ENCODE measurements at regions of chr17 and their contacts with region 1.

Region 1: DNA sequence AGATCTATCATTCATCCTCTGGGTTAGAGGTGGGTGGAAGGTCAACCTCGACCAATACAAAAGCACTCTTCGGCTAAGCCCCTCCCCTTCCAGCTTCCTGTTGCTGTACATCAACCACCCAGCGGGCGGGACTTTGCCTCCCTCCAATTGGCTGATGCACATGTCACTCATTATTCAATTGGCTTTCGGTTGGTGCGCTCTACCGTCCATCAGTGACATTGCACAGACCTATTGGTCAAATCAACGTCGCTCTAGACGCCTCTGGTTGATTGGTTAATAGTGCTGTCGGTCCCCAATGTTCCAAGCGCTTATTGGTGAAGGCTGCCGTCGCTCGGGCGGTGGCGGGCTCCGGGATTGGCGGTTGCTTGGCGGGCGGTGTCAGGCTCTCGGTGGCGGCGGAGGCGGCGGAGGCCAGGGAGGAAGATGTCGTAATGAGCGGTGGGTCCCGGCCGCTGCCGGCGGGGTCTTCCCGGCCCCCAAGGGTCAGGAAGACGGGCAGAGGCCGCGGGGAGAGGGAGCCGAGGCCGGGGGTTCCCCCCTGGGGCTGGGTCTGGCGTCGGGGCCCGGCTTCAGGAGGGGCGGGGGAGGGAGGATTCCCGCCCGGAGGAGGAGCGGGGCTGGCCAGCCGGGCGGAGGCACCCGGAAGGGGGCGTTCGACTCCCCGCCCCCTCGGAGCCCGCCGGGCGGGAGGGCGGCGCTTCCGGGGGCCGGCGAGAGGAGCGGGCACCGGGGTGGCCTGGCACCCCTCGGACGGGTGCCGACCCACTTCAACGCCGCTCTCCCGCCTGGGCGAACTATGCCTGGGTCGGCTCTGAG is at the start of gene SP2:
- DNase-seq: peak; percentile 100
- ATAC-seq: peak; percentile 88 to 95
- H3K4me3 ChIP-seq: peak within 1 kb of the TSS; percentile 86
- H3K27ac ChIP-seq: peak within 1 kb of the TSS; percentile 95 to 96
- H3K4me1 ChIP-seq: peaks cover 16% of the 10 kb centered on the region; the same call in 2 of the 3 replicates
- CTCF ChIP-seq: no peak
- EP300 ChIP-seq: no peak
- POLR2A ChIP-seq: peak; percentile 91
- RAD21 ChIP-seq: no peak
- polyA plus RNA-seq, gene SP2: 6.2 and 8.0 TPM in 2 replicates

Region 2: GRCh38 chr17:47763913-47764582 is 132.0 kb before region 1 on chr17:
- CTCF ChIA-PET with region 1: no interaction called
- POLR2A ChIA-PET with region 1: no interaction called
- DNase-seq: no peak
- ATAC-seq: no peak
- H3K4me3 ChIP-seq: no peak overlapping the region
- H3K27ac ChIP-seq: no peak overlapping the region
- H3K4me1 ChIP-seq: no peaks in the 10 kb centered on the region
- CTCF ChIP-seq: no peak
- EP300 ChIP-seq: no peak
- POLR2A ChIP-seq: no peak
- RAD21 ChIP-seq: no peak

Region 3: DNA sequence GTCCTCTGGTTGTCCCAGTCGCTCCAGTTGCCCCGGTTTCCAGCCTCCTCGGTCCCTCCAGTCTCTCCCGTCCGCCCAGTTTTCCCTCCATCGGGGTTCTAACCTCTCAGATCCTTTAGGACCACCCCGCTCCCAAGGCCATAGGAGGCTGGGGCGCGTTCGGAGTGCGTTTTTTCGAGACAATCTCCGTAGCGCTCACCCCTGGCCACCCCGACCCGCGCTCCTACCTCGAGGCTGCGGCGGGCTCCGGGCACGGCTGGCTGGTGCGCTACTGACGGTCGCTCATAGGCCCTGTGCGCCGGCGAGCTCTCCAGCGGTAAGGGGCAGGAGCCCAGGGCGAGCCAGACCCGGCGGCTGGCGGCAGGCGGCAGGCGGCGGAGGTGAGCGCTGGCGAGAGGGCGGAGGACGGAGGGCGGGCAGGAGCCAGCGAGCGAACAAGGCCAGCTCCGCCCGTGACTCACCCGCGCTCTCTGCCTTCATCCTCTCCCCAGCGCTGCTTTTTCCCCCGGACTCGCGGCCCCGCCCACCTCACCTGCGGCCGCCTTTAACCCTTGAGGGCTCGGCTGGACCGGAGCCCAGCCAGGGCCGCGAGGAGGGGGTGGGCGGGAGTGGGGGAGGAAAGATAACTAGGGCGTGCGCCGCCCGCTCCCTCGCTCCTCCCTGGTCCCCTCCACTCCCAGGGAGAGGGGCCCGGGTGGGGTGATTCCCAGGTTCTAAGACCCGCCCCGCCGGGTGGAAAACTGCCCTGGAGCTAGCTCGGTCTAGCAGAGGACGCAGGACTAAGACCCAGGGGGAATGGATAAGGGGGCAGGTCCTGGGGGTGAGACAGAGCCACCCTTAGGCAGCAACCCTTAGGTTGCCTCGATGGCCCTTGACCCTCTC is 45.1 kb before region 1 on chr17 and contains the start of gene SP6:
- CTCF ChIA-PET with region 1: interaction called, 1,860 read pairs
- POLR2A ChIA-PET with region 1: interaction called, 18 read pairs
- DNase-seq: peak; percentile 76 to 91
- ATAC-seq: peak; percentile 90 to 95
- H3K4me3 ChIP-seq: peak within 1 kb of the TSS; percentile 50
- H3K27ac ChIP-seq: peak within 1 kb of the TSS; percentile 74 to 91
- H3K4me1 ChIP-seq: peaks cover 16% of the 10 kb centered on the region
- CTCF ChIP-seq: peak; percentile 27; the same call in 2 of the 3 replicates
- EP300 ChIP-seq: no peak
- POLR2A ChIP-seq: peak; percentile 74
- RAD21 ChIP-seq: peak in 1 of 2 experiments; percentile 31; a peak in 1 of 5 replicates
- polyA plus RNA-seq, gene SP6: 0.61 and 0.67 TPM in 2 replicates